Dorsolateral prefrontal cortex (tissue), 120 donors: ENCODE measurements at regions of chr17 and their contacts with region 1.

Region 1: DNA sequence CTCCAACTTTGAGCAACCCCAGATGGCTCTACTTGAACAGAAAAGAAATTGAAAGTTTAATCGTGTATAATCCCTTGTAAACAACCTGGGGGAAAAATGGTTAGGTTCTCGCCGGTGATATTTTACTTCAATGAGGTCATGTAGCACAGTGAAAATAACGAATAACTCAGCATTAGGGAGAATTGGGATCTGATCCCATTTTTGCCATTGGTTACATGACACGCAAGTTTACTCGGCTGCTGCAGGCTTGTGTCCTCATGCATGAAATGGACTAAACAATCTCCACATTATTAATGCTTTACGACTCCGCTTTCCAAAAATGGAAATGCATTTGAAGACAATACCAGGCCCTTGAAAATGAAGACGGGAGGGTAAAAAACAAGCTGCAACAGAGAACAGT is 45.5 kb upstream of the LRRC37A3 start:
- DNase-seq: no peak
- H3K4me3 ChIP-seq: peak overlapping the region in 14 of 59 donors; percentile 4 to 66 (median 55)
- H3K27ac ChIP-seq: peak overlapping the region in 13 of 59 donors; percentile 0 to 73 (median 37)
- H3K27me3 ChIP-seq: no peaks in the 10 kb centered on the region
- CTCF ChIP-seq: no peak

Region 2: DNA sequence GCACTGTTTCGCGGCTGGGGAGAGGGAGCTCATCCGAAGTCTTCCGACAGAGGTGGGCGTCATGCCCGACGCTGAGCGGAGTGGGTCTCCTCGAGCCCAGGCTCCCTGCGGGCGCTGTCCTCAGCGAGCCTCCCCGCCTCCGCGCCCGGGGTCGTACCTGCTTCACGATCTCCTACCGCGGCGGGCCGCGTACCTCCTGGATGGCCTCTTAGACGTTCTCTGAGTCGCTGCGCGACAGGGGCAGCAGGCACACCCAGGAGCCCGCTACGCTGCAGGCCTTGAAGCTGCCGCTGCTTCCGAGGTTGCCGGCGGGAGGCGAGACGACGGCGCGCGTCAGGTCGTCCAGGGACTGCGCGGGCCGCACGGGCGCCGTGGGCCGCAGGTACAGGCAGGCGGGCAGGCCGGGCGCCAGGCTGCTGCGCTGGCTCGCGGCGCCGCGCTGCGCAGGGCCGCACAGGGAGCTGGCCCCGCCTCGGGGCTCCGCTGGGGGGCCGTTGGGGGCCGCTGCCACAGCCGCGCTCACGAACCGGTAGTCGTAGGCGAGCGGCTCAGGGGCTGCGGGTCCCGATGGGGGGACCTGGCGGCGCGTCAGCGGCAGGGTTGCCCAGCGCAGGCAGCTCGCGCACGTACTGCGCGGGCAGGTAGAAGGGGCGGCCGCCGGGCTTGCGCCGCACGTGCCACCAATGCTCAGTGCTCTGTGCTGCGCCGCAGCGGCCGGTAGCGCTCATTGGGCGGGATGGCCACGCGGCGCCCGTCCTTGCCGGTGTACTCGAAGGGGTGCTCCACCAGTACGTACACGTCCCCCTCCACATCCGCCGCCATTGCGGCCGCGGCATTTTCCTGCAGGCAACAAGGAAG is 186.3 kb before region 1 on chr17:
- intact Hi-C with region 1: loop called in 1 of 2 experiments (anchors 5 kb)
- DNase-seq: peak in 5 of 10 donors; percentile 33 to 60 (median 48)
- H3K4me3 ChIP-seq: peak overlapping the region in 58 of 59 donors; percentile 34 to 70 (median 54)
- H3K27ac ChIP-seq: peak overlapping the region in 58 of 59 donors; percentile 4 to 94 (median 84)
- H3K27me3 ChIP-seq: no peaks in the 10 kb centered on the region
- CTCF ChIP-seq: no peak

Region 3: DNA sequence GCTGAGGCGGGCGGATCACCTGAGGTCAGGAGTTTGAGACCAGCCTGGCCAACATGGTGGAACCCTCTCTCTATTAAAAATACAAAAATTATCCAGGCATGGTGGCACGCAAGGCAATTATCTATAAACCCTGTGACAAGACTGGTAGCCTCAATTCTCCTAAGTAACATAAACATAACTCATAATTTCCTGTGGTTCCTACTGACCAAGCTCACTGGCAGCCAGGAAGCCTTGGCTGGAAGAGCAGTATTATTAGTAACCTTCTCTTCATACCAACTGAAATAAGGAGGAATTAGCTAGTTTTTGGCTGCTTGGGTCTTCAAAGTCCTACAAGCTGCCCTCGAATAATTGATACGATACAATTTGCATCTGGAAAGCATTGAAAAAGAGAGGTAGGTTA is 13.9 kb before region 1 on chr17:
- intact Hi-C with region 1: no loop called
- DNase-seq: no peak
- H3K4me3 ChIP-seq: no peak overlapping the region
- H3K27ac ChIP-seq: no peak overlapping the region
- H3K27me3 ChIP-seq: no peaks in the 10 kb centered on the region
- CTCF ChIP-seq: no peak

Region 4: DNA sequence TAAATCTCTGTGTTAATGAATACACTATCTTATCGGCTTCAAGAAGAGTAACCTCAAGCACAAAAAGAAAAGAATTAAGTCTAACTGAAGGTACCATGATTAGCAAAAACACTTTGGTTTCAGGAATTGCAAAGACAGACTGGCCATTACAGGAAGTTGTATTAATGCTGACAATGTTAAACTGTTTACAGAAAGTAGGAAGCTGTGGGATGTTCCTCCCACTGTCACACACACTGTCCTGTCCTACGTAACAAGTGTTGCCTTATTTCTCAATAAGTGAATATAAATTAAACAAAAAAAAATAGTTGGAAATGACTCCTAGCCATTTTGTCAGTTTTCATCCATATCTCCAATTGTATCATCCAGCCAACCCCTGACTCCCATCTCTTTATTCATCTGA is 83.1 kb after region 1 on chr17:
- intact Hi-C with region 1: no loop called
- DNase-seq: no peak
- H3K4me3 ChIP-seq: peak overlapping the region in 4 of 59 donors; percentile 3 to 31 (median 16)
- H3K27ac ChIP-seq: peak overlapping the region in 56 of 59 donors; percentile 10 to 96 (median 63)
- H3K27me3 ChIP-seq: no peaks in the 10 kb centered on the region
- CTCF ChIP-seq: no peak